GM12878 (cell line): ENCODE measurements at regions of chr15 and their contacts with region 1.

Region 1: GRCh38 chr15:98954411-98954810 is 53.2 kb downstream of the PGPEP1L start:
- DNase-seq: peak; percentile 24
- ATAC-seq: no peak
- H3K4me3 ChIP-seq: no peak overlapping the region
- H3K27ac ChIP-seq: no peak overlapping the region
- H3K4me1 ChIP-seq: peaks cover 25% of the 10 kb centered on the region
- H3K27me3 ChIP-seq: no peaks in the 10 kb centered on the region
- CTCF ChIP-seq: no peak
- EP300 ChIP-seq: no peak
- POLR2A ChIP-seq: no peak
- RAD21 ChIP-seq: no peak

Region 2: GRCh38 chr15:98779463-98780071 is 174.8 kb before region 1 on chr15:
- CTCF ChIA-PET with region 1: interaction called, 5 read pairs
- POLR2A ChIA-PET with region 1: no interaction called
- RAD21 ChIA-PET with region 1: no interaction called
- SMC1A ChIA-PET with region 1: interaction called, 9 read pairs
- in situ Hi-C with region 1: no loop called
- intact Hi-C with region 1: loop called (anchors 5 kb)
- DNase-seq: peak; percentile 41
- ATAC-seq: peak; percentile 89
- H3K4me3 ChIP-seq: no peak overlapping the region
- H3K27ac ChIP-seq: no peak overlapping the region
- H3K4me1 ChIP-seq: peaks cover 19% of the 10 kb centered on the region
- H3K27me3 ChIP-seq: no peaks in the 10 kb centered on the region
- CTCF ChIP-seq: peak; percentile 80 to 99 (median 96)
- EP300 ChIP-seq: no peak
- POLR2A ChIP-seq: no peak
- RAD21 ChIP-seq: peak; percentile 84

Region 3: DNA sequence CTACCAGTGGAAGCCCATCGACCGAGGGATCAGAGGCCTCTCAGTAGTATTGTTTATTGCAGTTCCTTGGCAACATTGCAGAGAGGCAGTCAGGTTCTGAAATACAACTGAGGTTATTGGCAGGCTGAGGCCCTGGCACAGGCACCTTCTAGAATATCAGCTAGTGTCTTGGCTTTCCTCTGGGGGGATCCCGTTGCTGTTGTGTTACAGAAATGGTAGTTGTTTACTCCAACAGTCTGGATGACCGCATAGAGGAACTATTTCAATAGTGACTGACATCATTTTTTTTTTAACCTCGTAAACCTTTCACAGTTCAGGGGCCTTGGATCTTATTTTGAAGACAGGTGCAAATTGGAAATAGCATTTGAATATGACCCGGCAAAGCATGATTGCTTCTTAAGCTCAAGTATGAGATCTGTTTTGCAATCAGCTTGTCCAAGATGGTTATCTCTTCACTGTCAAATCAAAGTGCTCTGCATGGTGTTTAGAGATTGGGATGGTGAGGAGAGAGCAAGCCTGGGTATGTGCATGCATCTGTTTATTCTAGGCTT is 10.7 kb before region 1 on chr15:
- CTCF ChIA-PET with region 1: interaction called, 12 read pairs
- POLR2A ChIA-PET with region 1: interaction called, 11 read pairs
- RAD21 ChIA-PET with region 1: interaction called, 33 read pairs
- SMC1A ChIA-PET with region 1: interaction called, 59 read pairs
- in situ Hi-C with region 1: no loop called
- intact Hi-C with region 1: loop called (anchors 1 kb)
- DNase-seq: no peak
- ATAC-seq: peak; percentile 78
- H3K4me3 ChIP-seq: no peak overlapping the region
- H3K27ac ChIP-seq: no peak overlapping the region
- H3K4me1 ChIP-seq: no peaks in the 10 kb centered on the region
- H3K27me3 ChIP-seq: no peaks in the 10 kb centered on the region
- CTCF ChIP-seq: no peak
- EP300 ChIP-seq: no peak
- POLR2A ChIP-seq: no peak
- RAD21 ChIP-seq: 0 out of 2 replicates have a peak, but pooled peaks have one; percentile 1

Region 4: DNA sequence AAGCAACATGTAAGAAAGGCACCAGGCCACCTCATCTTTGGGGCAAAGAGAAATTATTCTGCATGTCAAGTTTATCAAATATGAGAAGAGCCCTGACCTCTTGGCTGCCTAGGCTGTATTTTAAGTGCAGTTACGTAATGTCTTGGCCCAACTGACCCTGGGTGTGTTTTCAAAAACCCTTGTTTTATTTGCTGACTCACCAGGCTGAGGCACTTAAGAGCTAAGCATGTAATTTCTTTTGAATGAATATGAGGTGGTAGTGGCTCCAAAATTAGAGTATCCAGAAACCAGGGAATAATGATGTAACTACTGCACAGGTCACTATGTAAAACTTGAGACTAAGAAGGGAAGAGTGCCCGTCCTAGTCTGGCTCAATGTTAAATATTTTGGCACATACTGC is 28.9 kb after region 1 on chr15:
- CTCF ChIA-PET with region 1: interaction called, 6 read pairs
- POLR2A ChIA-PET with region 1: interaction called, 18 read pairs
- RAD21 ChIA-PET with region 1: interaction called, 47 read pairs
- SMC1A ChIA-PET with region 1: interaction called, 63 read pairs
- in situ Hi-C with region 1: no loop called
- intact Hi-C with region 1: loop called (anchors 1 kb)
- DNase-seq: no peak
- ATAC-seq: no peak
- H3K4me3 ChIP-seq: no peak overlapping the region
- H3K27ac ChIP-seq: no peak overlapping the region
- H3K4me1 ChIP-seq: peaks cover 22% of the 10 kb centered on the region
- H3K27me3 ChIP-seq: no peaks in the 10 kb centered on the region
- CTCF ChIP-seq: no peak
- EP300 ChIP-seq: no peak
- POLR2A ChIP-seq: no peak
- RAD21 ChIP-seq: no peak

Region 5: DNA sequence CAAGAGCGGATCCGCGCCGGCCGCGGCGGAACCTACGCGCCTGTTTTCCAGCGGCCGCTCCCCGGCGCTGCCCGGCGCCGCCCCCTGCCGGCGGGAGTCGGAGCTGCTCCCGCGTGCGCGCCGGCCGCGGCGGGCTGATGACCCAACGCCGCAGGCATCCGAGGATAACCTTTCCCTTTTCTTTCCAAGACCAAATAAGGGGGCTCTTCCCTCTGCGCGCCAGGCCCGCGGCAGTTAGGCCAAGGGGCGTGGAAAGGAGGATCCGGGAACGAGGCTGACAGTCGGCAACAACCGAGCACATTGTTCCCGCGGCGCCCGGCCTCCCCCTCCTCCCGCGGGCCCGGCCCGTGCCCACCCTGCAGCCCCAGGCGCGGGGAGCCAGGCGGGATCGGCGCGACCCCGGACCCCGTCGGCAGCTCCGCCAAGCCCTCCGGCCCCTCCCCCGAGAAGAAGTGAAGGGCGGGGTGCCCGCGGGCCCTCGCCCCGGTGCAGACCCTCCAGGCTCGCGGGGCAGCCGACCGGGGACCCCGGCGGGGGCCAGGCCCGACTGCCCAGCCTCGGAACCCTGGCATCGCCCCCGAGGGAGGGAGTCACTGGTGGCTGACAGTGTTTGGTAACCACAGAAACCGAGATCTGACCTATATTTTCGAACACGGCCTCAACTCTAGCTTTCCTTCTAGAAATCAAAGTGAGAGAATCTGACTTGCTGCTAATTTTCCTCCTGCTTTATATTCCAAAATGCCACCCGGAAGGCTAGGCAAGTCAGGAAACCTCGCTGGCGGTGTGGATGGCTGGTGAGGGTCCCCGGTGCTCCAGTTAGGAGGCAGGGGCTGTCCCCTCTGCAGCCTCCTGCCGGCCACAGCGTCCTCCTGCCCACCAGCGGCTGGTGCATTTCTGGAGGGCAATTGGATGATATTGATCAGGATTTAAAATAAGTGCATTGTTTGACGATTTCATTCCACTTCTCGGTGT is 104.9 kb after region 1 on chr15:
- CTCF ChIA-PET with region 1: interaction called, 14 read pairs
- POLR2A ChIA-PET with region 1: interaction called, 8 read pairs
- RAD21 ChIA-PET with region 1: interaction called, 40 read pairs
- SMC1A ChIA-PET with region 1: interaction called, 27 read pairs
- in situ Hi-C with region 1: no loop called
- intact Hi-C with region 1: loop called (anchors 1 kb)
- DNase-seq: no peak
- ATAC-seq: peak; percentile 85
- H3K4me3 ChIP-seq: peak overlapping the region; percentile 69; the same call in 1 of the 2 replicates
- H3K27ac ChIP-seq: peak overlapping the region; percentile 43
- H3K4me1 ChIP-seq: peaks cover 16% of the 10 kb centered on the region
- H3K27me3 ChIP-seq: no peaks in the 10 kb centered on the region
- CTCF ChIP-seq: peak; percentile 57 to 71 (median 67); a peak in 5 of 6 replicates
- EP300 ChIP-seq: no peak
- POLR2A ChIP-seq: no peak
- RAD21 ChIP-seq: peak; percentile 81